Activated naive CD4-positive, alpha-beta T cell treated with anti-CD3 and anti-CD28 coated beads, Interleukin-2, amount 10 ng/mL, durations not matched to agents 7 days and 5 days (primary cell): ENCODE measurements at regions of chr1 and their contacts with region 1.

Region 1: GRCh38 chr1:15028102-15028501 is 125.4 kb upstream of the TMEM51 start:
- DNase-seq: no peak
- H3K4me3 Mint-ChIP-seq: no peak overlapping the region
- H3K27ac Mint-ChIP-seq: no peak overlapping the region
- H3K4me1 Mint-ChIP-seq: no peaks in the 10 kb centered on the region
- H3K27me3 Mint-ChIP-seq: peaks cover 8% of the 10 kb centered on the region

Region 2: DNA sequence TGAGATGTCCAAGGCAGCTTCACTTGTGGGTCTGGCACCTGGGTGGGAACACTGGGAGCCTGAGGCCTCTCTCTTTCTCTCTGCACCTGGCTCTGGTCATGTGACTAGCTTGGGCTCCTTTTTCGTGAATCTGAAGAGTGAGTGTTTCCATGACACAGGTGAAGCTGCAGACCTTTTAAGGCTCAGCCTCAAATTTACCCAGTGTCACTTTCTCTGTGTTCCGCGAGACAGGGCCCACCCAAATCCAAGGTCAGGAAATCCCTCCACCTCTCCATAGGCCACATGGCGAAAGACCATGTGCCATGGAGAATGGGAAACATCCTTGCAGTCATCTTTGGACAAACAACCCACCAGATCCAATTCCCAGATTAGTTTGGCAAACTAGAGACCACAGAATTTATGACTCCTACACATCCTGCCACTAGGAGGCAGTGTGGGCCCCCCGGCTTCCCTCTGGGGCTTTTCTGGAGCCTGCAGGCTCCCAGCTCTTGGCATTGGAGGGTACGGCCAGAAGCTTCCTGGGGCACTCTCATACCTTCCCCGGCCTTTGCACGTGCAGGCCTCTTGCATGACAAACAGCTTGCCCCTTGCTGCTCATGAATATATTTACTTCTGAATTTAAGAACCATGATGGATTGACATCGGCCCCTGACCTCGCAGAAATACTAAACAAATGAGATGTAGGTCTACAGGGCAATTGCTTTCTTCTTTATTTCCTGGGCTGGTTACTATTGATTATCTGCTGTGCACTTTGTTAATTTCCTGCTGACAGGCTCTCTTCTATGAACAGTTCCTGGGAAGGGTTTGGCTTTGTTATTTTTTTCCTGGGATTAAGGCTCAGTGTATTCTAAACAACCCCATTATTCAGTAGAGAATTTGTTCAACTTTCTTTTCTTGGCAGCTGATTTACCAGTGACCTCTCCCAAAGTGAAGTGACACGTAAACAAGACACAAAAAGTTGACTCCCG is 248.9 kb before region 1 on chr1:
- CTCF ChIA-PET with region 1: interaction called, 21 read pairs
- DNase-seq: peak; percentile 43
- H3K4me3 Mint-ChIP-seq: no peak overlapping the region
- H3K27ac Mint-ChIP-seq: no peak overlapping the region
- H3K4me1 Mint-ChIP-seq: peaks cover 9% of the 10 kb centered on the region
- H3K27me3 Mint-ChIP-seq: peaks cover 11% of the 10 kb centered on the region

Region 3: DNA sequence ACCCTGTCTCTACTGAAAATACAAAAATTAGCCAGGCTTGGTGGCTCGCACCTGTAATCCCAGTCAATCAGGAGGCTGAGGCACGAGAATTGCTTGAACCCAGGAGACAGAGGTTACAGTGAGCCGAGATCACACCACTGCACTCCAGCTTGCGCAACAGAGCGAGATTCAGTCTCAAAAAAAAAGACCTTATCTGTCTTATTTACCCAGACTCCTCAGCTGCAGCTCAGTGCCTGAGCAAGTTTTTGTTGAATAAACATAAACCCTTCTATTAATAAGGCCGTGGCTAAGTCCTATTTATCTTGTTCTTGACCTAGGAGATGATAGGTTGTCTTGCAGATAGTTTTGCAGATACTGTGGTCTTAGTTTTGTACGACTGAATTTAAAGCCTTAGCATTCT is 11.0 kb before region 1 on chr1:
- CTCF ChIA-PET with region 1: interaction called, 12 read pairs
- DNase-seq: no peak
- H3K4me3 Mint-ChIP-seq: no peak overlapping the region
- H3K27ac Mint-ChIP-seq: no peak overlapping the region
- H3K4me1 Mint-ChIP-seq: no peaks in the 10 kb centered on the region
- H3K27me3 Mint-ChIP-seq: peaks cover 3% of the 10 kb centered on the region

Region 4: DNA sequence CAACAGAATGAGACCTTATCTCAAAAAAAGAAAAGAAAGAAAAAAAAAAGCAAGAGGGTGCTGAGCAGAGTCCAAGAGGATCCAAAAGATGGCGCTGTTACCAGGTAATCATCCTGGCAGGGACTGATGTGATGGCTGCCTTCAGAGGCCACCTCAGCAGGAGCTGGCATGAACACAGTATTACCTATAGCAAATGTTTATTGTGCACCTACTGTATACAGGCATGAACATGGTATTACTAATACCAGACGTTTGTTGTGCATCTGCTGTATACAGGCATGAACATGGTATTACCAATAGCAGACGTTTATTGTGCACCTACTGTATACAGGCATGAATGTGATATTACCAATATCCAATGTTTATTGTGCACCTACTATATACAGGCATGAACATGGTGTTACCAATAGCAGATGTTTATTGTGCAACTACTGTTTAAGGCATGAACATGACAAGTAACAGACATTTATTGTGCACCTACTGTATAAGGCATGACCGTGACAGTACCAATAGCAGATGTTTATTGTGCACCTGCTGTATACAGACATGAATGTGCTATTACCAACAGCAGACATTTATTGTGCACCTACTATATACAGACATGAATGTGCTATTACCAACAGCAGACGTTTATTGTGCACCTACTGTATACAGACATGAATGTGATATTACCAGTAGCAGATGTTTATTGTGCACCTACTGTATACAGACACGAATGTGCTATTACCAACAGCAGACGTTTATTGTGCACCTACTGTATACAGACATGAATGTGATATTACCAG is 10.3 kb after region 1 on chr1:
- CTCF ChIA-PET with region 1: interaction called, 16 read pairs
- DNase-seq: peak; percentile 44
- H3K4me3 Mint-ChIP-seq: no peak overlapping the region
- H3K27ac Mint-ChIP-seq: no peak overlapping the region
- H3K4me1 Mint-ChIP-seq: peaks cover 8% of the 10 kb centered on the region
- H3K27me3 Mint-ChIP-seq: no peaks in the 10 kb centered on the region

Region 5: GRCh38 chr1:15249081-15249480 is 221.0 kb after region 1 on chr1:
- CTCF ChIA-PET with region 1: no interaction called
- DNase-seq: peak; percentile 88
- H3K4me3 Mint-ChIP-seq: peak overlapping the region; percentile 32
- H3K27ac Mint-ChIP-seq: peak overlapping the region; percentile 89
- H3K4me1 Mint-ChIP-seq: peaks cover 72% of the 10 kb centered on the region
- H3K27me3 Mint-ChIP-seq: peaks cover 68% of the 10 kb centered on the region